ENCODE measurements at regions of chr5 and their contacts with region 1.

Region 1: DNA sequence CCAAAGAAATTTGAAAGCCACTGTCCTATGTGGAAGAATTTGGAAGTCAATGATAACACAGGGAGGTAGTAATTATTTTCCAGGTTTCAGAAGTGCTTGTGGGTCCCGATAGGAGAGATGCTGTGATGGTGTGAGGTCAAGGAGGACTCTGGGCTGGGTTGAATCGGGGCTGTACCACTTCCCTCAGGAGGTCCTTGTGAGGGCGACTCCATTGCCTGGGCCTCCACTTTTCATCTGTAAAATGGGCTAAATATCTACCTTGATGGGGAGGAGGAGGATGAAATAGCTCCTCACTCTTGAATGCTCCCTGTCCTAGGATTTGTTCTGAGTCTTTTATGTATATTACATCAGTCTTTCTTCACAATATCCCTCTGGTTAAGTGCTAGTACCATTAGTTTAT is 59.0 kb downstream of the ROPN1L start:
- DNase-seq: no peak
- H3K4me3 Mint-ChIP-seq: no peak overlapping the region
- H3K27ac Mint-ChIP-seq: no peak overlapping the region
- H3K4me1 Mint-ChIP-seq: no peaks in the 10 kb centered on the region
- H3K27me3 Mint-ChIP-seq: no peaks in the 10 kb centered on the region

Region 2: DNA sequence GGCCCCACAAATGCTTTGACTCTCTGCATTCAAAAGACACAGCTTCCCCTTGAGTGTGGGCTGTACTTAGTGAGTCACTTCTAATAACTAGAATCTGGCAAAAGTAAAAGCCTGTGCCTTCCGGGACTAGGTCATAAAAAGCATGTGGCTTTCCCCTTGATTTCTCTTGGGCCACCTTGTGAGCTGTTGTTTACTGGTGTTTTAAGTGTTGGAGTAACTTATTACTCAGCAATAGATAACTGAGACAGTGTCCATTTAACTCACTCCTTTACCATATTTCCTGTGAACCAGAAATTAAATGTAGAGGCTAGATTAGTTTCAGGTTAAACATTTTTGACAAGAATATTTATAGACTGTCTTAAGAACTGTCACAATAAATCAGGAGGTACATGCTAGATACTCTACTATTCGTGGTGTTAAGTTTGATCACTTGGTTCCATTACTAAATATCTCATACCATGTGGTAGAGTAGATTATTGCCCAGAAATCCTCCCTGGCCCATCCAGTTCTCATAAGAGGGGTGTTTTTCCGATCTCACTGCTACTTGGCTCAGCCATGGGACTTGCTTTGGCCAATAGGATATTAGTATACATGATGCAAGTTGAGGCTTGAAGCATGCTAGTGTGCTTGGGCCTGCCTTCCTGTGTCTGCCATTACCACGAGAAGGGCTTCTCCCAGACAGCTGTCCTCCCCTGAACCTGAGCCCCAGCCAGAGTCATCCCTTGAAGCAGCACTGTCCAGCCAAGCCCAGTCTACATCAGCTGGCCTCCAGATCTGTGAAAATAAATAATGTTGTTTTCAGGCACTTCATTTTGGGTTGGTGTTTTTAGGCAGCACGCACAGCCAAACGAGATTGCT is 182.6 kb before region 1 on chr5:
- CTCF ChIA-PET with region 1: no interaction called
- POLR2A ChIA-PET with region 1: no interaction called
- DNase-seq: no peak
- H3K4me3 Mint-ChIP-seq: no peak overlapping the region
- H3K27ac Mint-ChIP-seq: no peak overlapping the region
- H3K4me1 Mint-ChIP-seq: no peaks in the 10 kb centered on the region
- H3K27me3 Mint-ChIP-seq: no peaks in the 10 kb centered on the region

Region 3: DNA sequence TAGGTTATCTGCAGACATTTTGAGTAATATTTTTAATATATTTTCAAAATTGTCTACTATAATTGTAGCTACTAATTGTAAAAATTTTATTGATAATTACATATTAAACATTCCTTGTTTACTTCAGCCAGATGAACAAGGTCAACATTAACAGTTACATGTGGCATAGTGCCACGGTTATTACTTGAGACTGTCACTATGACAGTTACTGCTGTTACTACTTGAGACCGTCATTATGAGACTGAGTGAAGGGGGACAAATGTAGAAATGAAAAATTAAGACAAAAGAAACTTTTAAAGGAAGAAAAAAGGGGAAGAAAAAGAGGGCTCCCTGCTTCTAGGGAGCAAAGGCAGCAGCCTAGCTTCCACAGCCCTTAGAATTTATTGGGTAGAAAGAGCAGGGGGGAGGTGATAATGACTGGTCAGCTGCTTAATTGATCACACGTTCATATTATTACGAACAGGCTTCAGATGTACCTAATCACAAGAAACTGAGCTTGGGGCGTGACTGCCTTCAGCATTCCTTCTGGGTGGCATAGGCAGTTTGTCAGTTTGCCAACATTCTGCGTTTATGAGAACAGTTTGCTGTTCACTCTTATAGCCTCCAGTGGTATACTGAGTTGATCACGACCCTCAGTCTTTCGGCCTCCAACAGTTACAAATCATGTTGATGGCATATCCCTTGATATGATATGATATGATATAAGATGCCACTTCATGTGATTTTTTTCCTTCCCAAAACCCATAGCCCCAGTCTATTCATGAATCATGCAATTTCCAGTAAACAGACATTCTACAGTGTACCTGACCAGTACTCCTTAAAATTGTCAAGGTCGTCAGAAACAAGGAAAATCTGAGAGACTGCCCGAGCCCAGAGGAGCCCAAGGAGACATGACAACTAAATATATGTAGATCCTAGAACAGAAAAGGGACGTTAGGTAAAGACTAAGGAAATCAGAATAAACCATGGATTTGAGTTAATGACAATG is 134.1 kb before region 1 on chr5:
- CTCF ChIA-PET with region 1: no interaction called
- POLR2A ChIA-PET with region 1: interaction called, 11 read pairs
- DNase-seq: no peak
- H3K4me3 Mint-ChIP-seq: no peak overlapping the region
- H3K27ac Mint-ChIP-seq: no peak overlapping the region
- H3K4me1 Mint-ChIP-seq: peaks cover 20% of the 10 kb centered on the region
- H3K27me3 Mint-ChIP-seq: no peaks in the 10 kb centered on the region

Region 4: GRCh38 chr5:10401498-10401897 is 99.2 kb before region 1 on chr5:
- CTCF ChIA-PET with region 1: no interaction called
- POLR2A ChIA-PET with region 1: no interaction called
- DNase-seq: no peak
- H3K4me3 Mint-ChIP-seq: no peak overlapping the region
- H3K27ac Mint-ChIP-seq: no peak overlapping the region
- H3K4me1 Mint-ChIP-seq: peaks cover 12% of the 10 kb centered on the region
- H3K27me3 Mint-ChIP-seq: no peaks in the 10 kb centered on the region

Region 5: GRCh38 chr5:10515492-10515891 is 14.8 kb after region 1 on chr5:
- CTCF ChIA-PET with region 1: no interaction called
- POLR2A ChIA-PET with region 1: no interaction called
- DNase-seq: no peak
- H3K4me3 Mint-ChIP-seq: no peak overlapping the region
- H3K27ac Mint-ChIP-seq: no peak overlapping the region
- H3K4me1 Mint-ChIP-seq: no peaks in the 10 kb centered on the region
- H3K27me3 Mint-ChIP-seq: no peaks in the 10 kb centered on the region

Measured in activated CD4-positive, alpha-beta T cell treated with anti-CD3 and anti-CD28 coated beads, Interleukin-2, amount 10 ng/mL, durations not matched to agents 7 days and 5 days (primary cell).